B cell (primary cell): ENCODE measurements at regions of chr4 and their contacts with region 1.

Region 1: GRCh38 chr4:83074086-83074704 is 39.2 kb downstream of the COPS4 start:
- DNase-seq: peak; percentile 85
- ATAC-seq: peak; percentile 85
- H3K4me3 ChIP-seq: no peak overlapping the region
- H3K4me3 Mint-ChIP-seq: peak overlapping the region; percentile 71
- H3K27ac ChIP-seq: no peak overlapping the region
- H3K27ac Mint-ChIP-seq: peak overlapping the region; percentile 57
- H3K4me1 ChIP-seq: peaks cover 16 to 19% of the 10 kb centered on the region in 2 donors
- H3K4me1 Mint-ChIP-seq: peaks cover 20% of the 10 kb centered on the region
- H3K27me3 ChIP-seq: no peaks in the 10 kb centered on the region
- H3K27me3 Mint-ChIP-seq: no peaks in the 10 kb centered on the region
- CTCF ChIP-seq: peak; percentile 78

Region 2: DNA sequence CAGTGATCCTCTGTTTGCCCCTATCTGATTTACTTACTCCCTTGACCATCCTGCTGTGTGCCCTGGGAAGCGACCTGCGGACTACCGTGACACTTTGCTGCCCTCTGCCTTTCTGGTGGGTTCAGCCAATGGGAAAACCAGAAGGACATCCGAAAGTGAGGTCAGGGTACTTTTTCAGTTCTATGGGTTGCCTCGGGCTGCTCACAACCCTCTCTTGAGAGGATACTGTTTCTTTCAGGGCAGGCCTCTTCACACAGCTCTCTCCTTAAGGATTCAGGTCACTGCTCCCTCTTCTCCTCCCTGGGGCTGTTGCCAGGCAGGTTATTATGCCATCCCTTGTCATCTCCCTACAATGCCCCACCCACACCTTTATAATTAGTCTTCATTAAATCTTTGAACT is 18.9 kb after region 1 on chr4:
- CTCF ChIA-PET with region 1: interaction called, 16 read pairs
- POLR2A ChIA-PET with region 1: no interaction called
- intact Hi-C with region 1: no loop called
- DNase-seq: no peak
- ATAC-seq: no peak
- H3K4me3 ChIP-seq: no peak overlapping the region
- H3K4me3 Mint-ChIP-seq: no peak overlapping the region
- H3K27ac ChIP-seq: peak overlapping the region in 1 of 2 donors; percentile 58
- H3K27ac Mint-ChIP-seq: peak overlapping the region; percentile 80
- H3K4me1 ChIP-seq: peaks cover 0 to 5% of the 10 kb centered on the region in 2 donors
- H3K4me1 Mint-ChIP-seq: peaks cover 29% of the 10 kb centered on the region
- H3K27me3 ChIP-seq: no peaks in the 10 kb centered on the region
- H3K27me3 Mint-ChIP-seq: no peaks in the 10 kb centered on the region
- CTCF ChIP-seq: no peak

Region 3: DNA sequence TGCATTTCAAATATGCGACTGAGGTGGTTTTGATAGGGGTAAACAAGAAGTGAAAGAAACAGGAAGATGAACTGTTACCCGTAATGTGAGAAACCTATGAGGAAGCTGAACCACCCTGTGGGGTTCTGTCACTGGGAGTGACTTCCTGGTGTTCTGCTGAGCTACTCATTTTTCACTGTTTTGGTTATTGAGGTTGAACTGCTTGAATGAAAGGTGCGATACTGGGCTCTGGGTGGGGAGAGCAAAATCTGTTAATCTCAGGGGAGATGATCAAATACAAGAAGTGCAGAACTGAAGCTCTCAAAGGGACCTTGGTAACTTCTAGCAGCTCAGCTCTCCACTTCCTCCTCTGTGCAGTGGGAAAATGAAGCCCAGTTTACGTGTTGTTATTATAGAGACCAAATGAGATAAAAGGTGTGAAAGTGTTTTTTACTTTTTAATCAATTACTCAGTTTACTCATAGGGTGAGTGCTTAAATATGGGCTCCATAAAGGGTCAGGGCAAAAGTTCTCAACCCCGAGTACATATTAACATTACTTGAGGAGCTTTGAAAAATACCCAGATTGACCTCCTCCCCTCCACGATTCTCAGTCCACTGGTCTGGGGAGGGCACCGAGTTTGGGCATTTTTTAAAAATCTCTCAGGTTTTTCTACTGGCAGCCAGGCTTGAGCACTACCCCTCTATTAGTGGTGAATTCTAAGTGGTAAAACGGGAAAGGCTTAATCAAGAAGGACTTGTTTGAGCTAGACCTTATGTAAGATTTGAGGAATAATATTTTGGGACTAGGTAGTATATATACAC is 143.7 kb after region 1 on chr4:
- CTCF ChIA-PET with region 1: interaction called, 12 read pairs
- POLR2A ChIA-PET with region 1: no interaction called
- intact Hi-C with region 1: no loop called
- DNase-seq: peak; percentile 95
- ATAC-seq: peak; percentile 90
- H3K4me3 ChIP-seq: peak overlapping the region in 3 of 5 experiments; percentile 6 to 37 (median 30)
- H3K4me3 Mint-ChIP-seq: peak overlapping the region; percentile 24
- H3K27ac ChIP-seq: peak overlapping the region; percentile 88 to 94
- H3K27ac Mint-ChIP-seq: peak overlapping the region; percentile 92
- H3K4me1 ChIP-seq: peaks cover 90 to 94% of the 10 kb centered on the region in 2 donors
- H3K4me1 Mint-ChIP-seq: peaks cover 87% of the 10 kb centered on the region
- H3K27me3 ChIP-seq: no peaks in the 10 kb centered on the region
- H3K27me3 Mint-ChIP-seq: no peaks in the 10 kb centered on the region
- CTCF ChIP-seq: no peak

Region 4: GRCh38 chr4:83259586-83259985 is 185.4 kb after region 1 on chr4:
- CTCF ChIA-PET with region 1: interaction called, 105 read pairs
- POLR2A ChIA-PET with region 1: interaction called, 6 read pairs
- intact Hi-C with region 1: loop called (anchors 1 kb)
- DNase-seq: no peak
- ATAC-seq: no peak
- H3K4me3 ChIP-seq: no peak overlapping the region
- H3K4me3 Mint-ChIP-seq: no peak overlapping the region
- H3K27ac ChIP-seq: peak overlapping the region in 1 of 2 donors; percentile 5
- H3K27ac Mint-ChIP-seq: peak overlapping the region; percentile 21
- H3K4me1 ChIP-seq: peaks cover 44 to 53% of the 10 kb centered on the region in 2 donors
- H3K4me1 Mint-ChIP-seq: peaks cover 42% of the 10 kb centered on the region
- H3K27me3 ChIP-seq: no peaks in the 10 kb centered on the region
- H3K27me3 Mint-ChIP-seq: no peaks in the 10 kb centered on the region
- CTCF ChIP-seq: no peak

Region 5: GRCh38 chr4:83276299-83277040 is 202.3 kb after region 1 on chr4:
- CTCF ChIA-PET with region 1: interaction called, 139 read pairs
- POLR2A ChIA-PET with region 1: no interaction called
- intact Hi-C with region 1: no loop called
- DNase-seq: peak; percentile 51
- ATAC-seq: peak; percentile 54
- H3K4me3 ChIP-seq: peak overlapping the region in 1 of 5 experiments; percentile 23
- H3K4me3 Mint-ChIP-seq: peak overlapping the region; percentile 52
- H3K27ac ChIP-seq: peak overlapping the region in 1 of 2 donors; percentile 48
- H3K27ac Mint-ChIP-seq: peak overlapping the region; percentile 62
- H3K4me1 ChIP-seq: peaks cover 28 to 33% of the 10 kb centered on the region in 2 donors
- H3K4me1 Mint-ChIP-seq: peaks cover 56% of the 10 kb centered on the region
- H3K27me3 ChIP-seq: no peaks in the 10 kb centered on the region
- H3K27me3 Mint-ChIP-seq: no peaks in the 10 kb centered on the region
- CTCF ChIP-seq: no peak